ENCODE measurements at regions of chr2 and their contacts with region 1.

Region 1: DNA sequence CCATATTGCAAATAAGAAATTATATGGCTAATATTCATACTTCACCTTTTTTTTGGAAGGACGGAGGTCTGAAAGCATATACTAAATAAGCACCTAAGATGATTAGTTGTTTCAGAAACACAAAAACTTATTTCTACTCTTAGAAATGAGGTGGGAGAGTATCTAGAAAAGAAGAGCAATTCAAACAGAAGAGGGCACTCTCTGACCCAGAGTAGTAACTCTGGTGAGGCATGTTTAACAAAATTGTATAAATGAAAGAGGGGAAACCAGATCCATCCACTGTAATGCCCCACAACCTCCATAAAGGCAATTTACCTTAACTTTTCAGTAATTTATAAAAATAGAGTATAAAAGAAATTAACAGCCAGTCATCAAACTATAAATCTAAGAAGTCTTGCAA is 669.6 kb upstream of the VRK2 start:
- DNase-seq: no peak
- ATAC-seq: no peak
- H3K4me3 ChIP-seq: no peak overlapping the region
- H3K27ac ChIP-seq: no peak overlapping the region
- H3K4me1 ChIP-seq: no peaks in the 10 kb centered on the region
- H3K27me3 ChIP-seq: no peaks in the 10 kb centered on the region
- CTCF ChIP-seq: no peak; the same call in 1 of the 2 replicates

Region 2: GRCh38 chr2:57321908-57322307 is 55.1 kb before region 1 on chr2:
- CTCF ChIA-PET with region 1: no interaction called
- POLR2A ChIA-PET with region 1: no interaction called
- in situ Hi-C with region 1: no loop called
- intact Hi-C with region 1: no loop called
- DNase-seq: no peak
- ATAC-seq: no peak
- H3K4me3 ChIP-seq: no peak overlapping the region
- H3K27ac ChIP-seq: no peak overlapping the region
- H3K4me1 ChIP-seq: no peaks in the 10 kb centered on the region
- H3K27me3 ChIP-seq: no peaks in the 10 kb centered on the region
- CTCF ChIP-seq: no peak

Region 3: GRCh38 chr2:57460396-57461276 is 83.7 kb after region 1 on chr2:
- CTCF ChIA-PET with region 1: no interaction called
- POLR2A ChIA-PET with region 1: no interaction called
- in situ Hi-C with region 1: no loop called
- intact Hi-C with region 1: loop called (anchors 10 kb)
- DNase-seq: no peak
- ATAC-seq: no peak
- H3K4me3 ChIP-seq: no peak overlapping the region
- H3K27ac ChIP-seq: no peak overlapping the region
- H3K4me1 ChIP-seq: no peaks in the 10 kb centered on the region; the same call in none of the 2 replicates
- H3K27me3 ChIP-seq: no peaks in the 10 kb centered on the region
- CTCF ChIP-seq: no peak

Region 4: DNA sequence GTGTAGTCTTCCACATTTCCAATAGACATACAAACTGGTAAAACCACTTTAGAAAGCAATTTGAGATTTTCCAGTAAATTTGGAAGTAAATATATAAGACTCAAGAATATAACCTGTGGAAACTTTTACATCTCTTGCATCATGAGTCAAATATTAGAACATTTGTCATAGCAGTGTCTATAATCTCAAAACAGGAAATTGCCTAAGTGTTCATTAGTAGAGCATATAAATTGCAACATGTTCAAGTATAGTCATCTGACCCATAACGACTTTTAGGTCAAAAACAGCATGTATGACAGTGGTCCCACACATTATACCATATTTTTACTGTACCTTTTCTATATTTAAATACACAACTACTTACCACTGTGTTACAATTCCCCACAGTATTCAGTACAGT is 113.8 kb after region 1 on chr2:
- CTCF ChIA-PET with region 1: no interaction called
- POLR2A ChIA-PET with region 1: no interaction called
- in situ Hi-C with region 1: no loop called
- intact Hi-C with region 1: no loop called
- DNase-seq: no peak
- ATAC-seq: no peak
- H3K4me3 ChIP-seq: no peak overlapping the region
- H3K27ac ChIP-seq: no peak overlapping the region
- H3K4me1 ChIP-seq: no peaks in the 10 kb centered on the region
- H3K27me3 ChIP-seq: no peaks in the 10 kb centered on the region
- CTCF ChIP-seq: no peak

Region 5: DNA sequence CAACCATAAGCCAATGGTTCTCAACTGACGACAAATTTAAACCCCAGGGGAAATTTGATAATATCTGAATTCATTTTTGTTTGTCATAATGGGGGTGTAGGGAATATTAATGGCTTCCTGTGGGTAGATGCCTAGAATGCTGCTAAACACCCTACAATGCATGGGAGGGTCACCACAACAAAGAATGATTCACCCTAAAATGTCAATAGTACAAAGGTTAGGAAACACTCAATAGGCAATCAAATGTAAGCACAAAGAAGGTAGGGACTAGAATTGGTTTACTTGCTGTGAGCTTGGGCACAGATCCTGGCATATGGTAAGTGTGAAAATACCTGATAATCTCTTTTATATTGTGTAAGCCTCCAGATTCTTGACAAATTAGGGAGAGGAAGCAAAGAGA is 884.2 kb after region 1 on chr2:
- CTCF ChIA-PET with region 1: no interaction called
- POLR2A ChIA-PET with region 1: no interaction called
- in situ Hi-C with region 1: no loop called
- intact Hi-C with region 1: no loop called
- DNase-seq: no peak
- ATAC-seq: no peak
- H3K4me3 ChIP-seq: no peak overlapping the region
- H3K27ac ChIP-seq: no peak overlapping the region
- H3K4me1 ChIP-seq: no peaks in the 10 kb centered on the region
- H3K27me3 ChIP-seq: no peaks in the 10 kb centered on the region
- CTCF ChIP-seq: no peak

Region 6: GRCh38 chr2:59378127-59378526 is 2001.1 kb after region 1 on chr2:
- CTCF ChIA-PET with region 1: no interaction called
- POLR2A ChIA-PET with region 1: no interaction called
- in situ Hi-C with region 1: no loop called
- intact Hi-C with region 1: no loop called
- DNase-seq: no peak
- ATAC-seq: no peak
- H3K4me3 ChIP-seq: no peak overlapping the region
- H3K27ac ChIP-seq: no peak overlapping the region
- H3K4me1 ChIP-seq: no peaks in the 10 kb centered on the region
- H3K27me3 ChIP-seq: no peaks in the 10 kb centered on the region
- CTCF ChIP-seq: no peak